ENCODE measurements at regions of chr2 and their contacts with region 1.

Region 1: GRCh38 chr2:153519257-153519875 is 40.8 kb upstream of the RPRM start:
- DNase-seq: peak; percentile 32 to 67 (median 37)
- ATAC-seq: peak; percentile 25; the same call in 1 of the 3 replicates
- H3K4me3 ChIP-seq: no peak overlapping the region
- H3K27ac ChIP-seq: no peak overlapping the region
- H3K4me1 ChIP-seq: no peaks in the 10 kb centered on the region
- H3K27me3 ChIP-seq: no peaks in the 10 kb centered on the region
- CTCF ChIP-seq: peak; percentile 43 to 74 (median 67); a peak in 5 of 6 replicates
- EP300 ChIP-seq: no peak
- POLR2A ChIP-seq: no peak
- RAD21 ChIP-seq: peak; percentile 54 to 75

Region 2: DNA sequence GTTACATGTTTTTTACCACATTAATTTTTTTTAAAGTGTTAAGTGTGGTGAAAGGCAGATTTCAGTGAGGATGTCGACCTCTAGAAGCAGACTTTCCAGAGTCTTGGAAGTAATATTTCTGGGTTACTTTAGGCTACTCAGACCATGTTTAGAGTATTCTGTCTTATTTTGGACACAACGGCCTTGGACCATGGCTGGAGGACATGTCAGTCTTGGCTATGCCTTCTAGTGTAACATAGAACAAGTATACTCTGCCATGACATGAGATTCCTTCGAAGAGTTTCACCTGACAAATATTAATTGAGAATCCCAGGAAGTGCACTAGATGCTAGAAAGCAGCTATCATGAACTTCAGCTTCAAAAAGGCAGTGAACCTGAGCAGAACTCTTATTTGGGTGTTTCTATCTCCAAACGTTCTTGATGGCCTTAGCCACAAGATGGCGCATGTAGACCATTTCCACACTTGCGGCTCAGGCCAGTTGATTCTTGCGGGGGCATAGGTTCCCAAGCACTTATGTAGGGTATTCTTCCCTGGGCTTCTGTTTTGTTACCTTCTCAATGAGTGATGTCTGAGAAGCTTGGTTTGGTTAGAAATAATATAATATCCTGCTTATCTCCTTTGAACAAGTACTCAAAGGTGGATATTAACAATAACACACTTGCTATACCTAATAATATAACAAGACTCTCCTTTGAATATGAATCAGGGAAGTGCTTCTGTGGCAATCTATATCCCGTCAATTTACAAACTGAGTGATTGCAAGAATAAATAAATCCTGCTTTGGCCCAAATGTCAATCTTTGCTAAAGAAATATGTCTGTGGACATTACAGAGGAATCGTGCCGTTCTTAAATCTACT is 1482.5 kb before region 1 on chr2:
- CTCF ChIA-PET with region 1: no interaction called
- POLR2A ChIA-PET with region 1: no interaction called
- in situ Hi-C with region 1: no loop called
- intact Hi-C with region 1: loop called (anchors 2 kb)
- DNase-seq: peak; percentile 58 to 84 (median 66)
- ATAC-seq: peak; percentile 93
- H3K4me3 ChIP-seq: no peak overlapping the region
- H3K27ac ChIP-seq: no peak overlapping the region
- H3K4me1 ChIP-seq: no peaks in the 10 kb centered on the region
- H3K27me3 ChIP-seq: peaks cover 13 to 41% of the 10 kb centered on the region in 2 experiments; a peak in 4 of 5 replicates
- CTCF ChIP-seq: peak; percentile 83 to 93 (median 86)
- EP300 ChIP-seq: no peak
- POLR2A ChIP-seq: no peak
- RAD21 ChIP-seq: peak; percentile 97

Region 3: GRCh38 chr2:152189622-152190495 is 1329.5 kb before region 1 on chr2:
- CTCF ChIA-PET with region 1: no interaction called
- POLR2A ChIA-PET with region 1: no interaction called
- in situ Hi-C with region 1: no loop called
- intact Hi-C with region 1: loop called (anchors 10 kb)
- DNase-seq: peak; percentile 30 to 59 (median 42)
- ATAC-seq: peak; percentile 95
- H3K4me3 ChIP-seq: no peak overlapping the region
- H3K27ac ChIP-seq: no peak overlapping the region
- H3K4me1 ChIP-seq: no peaks in the 10 kb centered on the region
- H3K27me3 ChIP-seq: no peaks in the 10 kb centered on the region; a peak in 2 of 5 replicates
- CTCF ChIP-seq: peak; percentile 66 to 86 (median 73)
- EP300 ChIP-seq: no peak
- POLR2A ChIP-seq: no peak
- RAD21 ChIP-seq: peak; percentile 93 to 95

Region 4: GRCh38 chr2:152861349-152861942 is 657.9 kb before region 1 on chr2:
- CTCF ChIA-PET with region 1: no interaction called
- POLR2A ChIA-PET with region 1: no interaction called
- in situ Hi-C with region 1: no loop called
- intact Hi-C with region 1: loop called (anchors 5 kb)
- DNase-seq: peak; percentile 58 to 73 (median 66)
- ATAC-seq: peak; percentile 84
- H3K4me3 ChIP-seq: no peak overlapping the region
- H3K27ac ChIP-seq: no peak overlapping the region
- H3K4me1 ChIP-seq: no peaks in the 10 kb centered on the region
- H3K27me3 ChIP-seq: no peaks in the 10 kb centered on the region
- CTCF ChIP-seq: peak; percentile 49 to 78 (median 66)
- EP300 ChIP-seq: no peak
- POLR2A ChIP-seq: no peak
- RAD21 ChIP-seq: peak in 1 of 2 experiments; percentile 66; a peak in 3 of 4 replicates

Region 5: DNA sequence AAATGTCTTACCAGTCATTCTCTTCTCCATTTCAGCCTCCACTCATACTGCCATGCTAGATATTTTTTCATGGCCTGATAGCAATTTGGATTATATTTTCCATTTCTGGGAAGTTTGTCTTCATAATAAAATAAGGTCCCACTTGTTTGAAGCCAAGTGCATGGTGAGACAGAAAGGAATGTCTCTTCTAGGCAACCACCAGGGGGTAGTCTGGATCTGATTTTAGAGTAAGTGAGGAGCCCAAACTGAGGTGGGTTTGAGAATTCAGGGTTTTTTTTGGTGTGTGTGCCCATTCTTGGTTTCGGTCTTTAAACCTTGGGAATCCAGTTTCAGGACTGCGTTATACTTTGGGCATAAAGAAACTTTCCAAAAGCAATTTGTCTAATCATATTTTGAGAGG is 356.3 kb before region 1 on chr2:
- CTCF ChIA-PET with region 1: no interaction called
- POLR2A ChIA-PET with region 1: no interaction called
- in situ Hi-C with region 1: no loop called
- intact Hi-C with region 1: loop called (anchors 5 kb)
- DNase-seq: peak in 1 of 4 experiments; percentile 9
- ATAC-seq: no peak
- H3K4me3 ChIP-seq: no peak overlapping the region
- H3K27ac ChIP-seq: no peak overlapping the region
- H3K4me1 ChIP-seq: no peaks in the 10 kb centered on the region
- H3K27me3 ChIP-seq: no peaks in the 10 kb centered on the region
- CTCF ChIP-seq: peak in 1 of 3 experiments; percentile 22; a peak in 1 of 6 replicates
- EP300 ChIP-seq: no peak
- POLR2A ChIP-seq: no peak
- RAD21 ChIP-seq: peak; percentile 14 to 32; a peak in 2 of 4 replicates

Measured in K562 (cell line).